OCI-LY7 (cell line): ENCODE measurements at regions of chr20 and their contacts with region 1.

Region 1: GRCh38 chr20:25424536-25424935 is 17.1 kb downstream of the GINS1 start:
- DNase-seq: no peak
- H3K4me3 ChIP-seq: no peak overlapping the region
- H3K27ac ChIP-seq: no peak overlapping the region
- H3K4me1 ChIP-seq: no peaks in the 10 kb centered on the region
- CTCF ChIP-seq: no peak

Region 2: GRCh38 chr20:25273541-25274358 is 150.8 kb before region 1 on chr20:
- CTCF ChIA-PET with region 1: no interaction called
- POLR2A ChIA-PET with region 1: no interaction called
- intact Hi-C with region 1: no loop called
- DNase-seq: no peak
- H3K4me3 ChIP-seq: no peak overlapping the region
- H3K27ac ChIP-seq: no peak overlapping the region
- H3K4me1 ChIP-seq: no peaks in the 10 kb centered on the region
- CTCF ChIP-seq: no peak

Region 3: GRCh38 chr20:25439328-25439727 is 14.8 kb after region 1 on chr20:
- CTCF ChIA-PET with region 1: no interaction called
- POLR2A ChIA-PET with region 1: interaction called, 7 read pairs
- intact Hi-C with region 1: loop called (anchors 2 kb)
- DNase-seq: peak; percentile 69
- H3K4me3 ChIP-seq: no peak overlapping the region
- H3K27ac ChIP-seq: peak overlapping the region; percentile 22
- H3K4me1 ChIP-seq: peaks cover 14% of the 10 kb centered on the region
- CTCF ChIP-seq: no peak